Dorsolateral prefrontal cortex (tissue), 120 donors: ENCODE measurements at regions of chr7 and their contacts with region 1.

Region 1: GRCh38 chr7:78489476-78490240 is 691.1 kb downstream of the PHTF2 start:
- DNase-seq: no peak
- H3K4me3 ChIP-seq: peak overlapping the region; percentile 8 to 67 (median 47)
- H3K27ac ChIP-seq: peak overlapping the region; percentile 11 to 90 (median 74)
- H3K27me3 ChIP-seq: no peaks in the 10 kb centered on the region
- CTCF ChIP-seq: no peak

Region 2: GRCh38 chr7:78279032-78279431 is 210.6 kb before region 1 on chr7:
- intact Hi-C with region 1: no loop called
- DNase-seq: no peak
- H3K4me3 ChIP-seq: no peak overlapping the region
- H3K27ac ChIP-seq: no peak overlapping the region
- H3K27me3 ChIP-seq: no peaks in the 10 kb centered on the region
- CTCF ChIP-seq: no peak

Region 3: GRCh38 chr7:78427209-78427608 is 62.4 kb before region 1 on chr7:
- intact Hi-C with region 1: loop called in 1 of 2 experiments (anchors 10 kb)
- DNase-seq: no peak
- H3K4me3 ChIP-seq: peak overlapping the region in 1 of 59 donors; percentile 1
- H3K27ac ChIP-seq: peak overlapping the region in 2 of 59 donors; percentile 17 to 33
- H3K27me3 ChIP-seq: no peaks in the 10 kb centered on the region
- CTCF ChIP-seq: no peak

Region 4: DNA sequence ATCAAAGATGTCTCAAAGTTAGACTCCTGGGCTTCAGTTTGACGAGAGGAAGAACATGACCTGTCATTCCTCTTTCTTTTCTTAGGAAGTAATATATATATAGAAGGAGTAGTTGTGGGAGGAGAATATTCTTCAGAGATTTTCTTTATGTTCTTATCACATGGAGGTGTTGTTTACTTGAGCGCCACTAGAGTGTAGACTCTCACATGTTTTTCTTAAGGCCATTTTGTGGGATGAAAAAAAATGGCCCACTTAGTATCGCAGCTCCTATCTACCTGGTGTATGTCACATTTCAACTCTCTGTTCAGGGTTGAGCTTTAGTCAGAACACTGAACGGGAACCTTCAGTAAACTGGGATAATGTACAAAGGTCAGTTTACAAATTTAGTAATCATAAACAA is 45.8 kb before region 1 on chr7:
- intact Hi-C with region 1: loop called in 1 of 2 experiments (anchors 5 kb)
- DNase-seq: no peak
- H3K4me3 ChIP-seq: no peak overlapping the region
- H3K27ac ChIP-seq: peak overlapping the region in 5 of 59 donors; percentile 1 to 38 (median 33)
- H3K27me3 ChIP-seq: no peaks in the 10 kb centered on the region
- CTCF ChIP-seq: peak in 38 of 56 donors; percentile 7 to 49 (median 31)